ENCODE measurements at regions of chrX and their contacts with region 1.

Region 1: GRCh38 chrX:4547213-4547836 is 833.9 kb upstream of the PRKX start:
- DNase-seq: peak; percentile 77
- ATAC-seq: peak; percentile 52; the same call in 1 of the 2 replicates
- H3K4me3 ChIP-seq: no peak overlapping the region
- H3K27ac ChIP-seq: no peak overlapping the region
- H3K4me1 ChIP-seq: peaks cover 14% of the 10 kb centered on the region
- H3K27me3 ChIP-seq: no peaks in the 10 kb centered on the region
- CTCF ChIP-seq: peak; percentile 87

Region 2: DNA sequence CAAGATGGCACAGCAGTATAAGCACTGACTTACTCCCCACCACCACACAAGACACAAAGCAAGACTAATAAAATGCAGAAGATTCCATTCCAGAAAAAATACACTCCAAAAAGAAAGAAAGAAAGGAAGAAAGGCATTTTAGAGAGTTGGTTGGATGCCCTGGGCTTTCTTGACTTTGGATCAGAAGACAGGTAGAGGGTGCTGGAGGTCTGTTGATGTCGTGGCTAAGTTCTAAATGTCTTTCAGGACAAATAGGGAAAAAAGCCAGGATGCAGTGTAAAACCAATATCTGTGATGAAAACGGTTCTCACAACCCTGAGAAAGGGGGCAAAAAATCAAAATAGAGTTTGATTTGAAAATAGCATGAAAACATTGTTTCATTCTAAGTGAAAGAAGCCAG is 278.6 kb before region 1 on chrX:
- CTCF ChIA-PET with region 1: no interaction called
- POLR2A ChIA-PET with region 1: no interaction called
- intact Hi-C with region 1: loop called (anchors 2 kb)
- DNase-seq: peak; percentile 45
- ATAC-seq: peak; percentile 40; the same call in 1 of the 2 replicates
- H3K4me3 ChIP-seq: no peak overlapping the region
- H3K27ac ChIP-seq: no peak overlapping the region
- H3K4me1 ChIP-seq: peaks cover 9% of the 10 kb centered on the region
- H3K27me3 ChIP-seq: no peaks in the 10 kb centered on the region
- CTCF ChIP-seq: peak; percentile 55

Region 3: DNA sequence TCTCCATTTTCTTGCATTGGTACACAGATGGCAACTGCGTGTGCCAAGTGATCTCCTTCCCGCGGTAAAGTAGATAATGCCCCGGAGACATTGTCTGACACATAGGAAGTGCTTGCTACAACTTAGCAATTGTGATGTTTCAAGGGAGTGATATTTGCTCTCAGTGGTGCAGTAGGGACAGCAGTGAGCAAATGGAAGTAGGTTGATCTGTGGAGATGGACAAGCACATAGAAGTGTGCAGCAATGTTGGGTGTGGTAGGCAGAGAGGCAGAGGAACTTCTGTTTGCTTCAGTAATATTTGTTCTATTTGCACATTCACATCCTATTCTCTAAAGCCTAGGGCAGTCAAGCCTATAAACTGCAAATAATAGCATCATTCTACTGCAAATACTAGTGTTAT is 12.9 kb after region 1 on chrX:
- CTCF ChIA-PET with region 1: no interaction called
- POLR2A ChIA-PET with region 1: no interaction called
- intact Hi-C with region 1: no loop called
- DNase-seq: peak; percentile 65
- ATAC-seq: peak; percentile 97
- H3K4me3 ChIP-seq: no peak overlapping the region
- H3K27ac ChIP-seq: peak overlapping the region; percentile 9; the same call in 1 of the 2 replicates
- H3K4me1 ChIP-seq: peaks cover 9% of the 10 kb centered on the region
- H3K27me3 ChIP-seq: no peaks in the 10 kb centered on the region
- CTCF ChIP-seq: no peak

Region 4: DNA sequence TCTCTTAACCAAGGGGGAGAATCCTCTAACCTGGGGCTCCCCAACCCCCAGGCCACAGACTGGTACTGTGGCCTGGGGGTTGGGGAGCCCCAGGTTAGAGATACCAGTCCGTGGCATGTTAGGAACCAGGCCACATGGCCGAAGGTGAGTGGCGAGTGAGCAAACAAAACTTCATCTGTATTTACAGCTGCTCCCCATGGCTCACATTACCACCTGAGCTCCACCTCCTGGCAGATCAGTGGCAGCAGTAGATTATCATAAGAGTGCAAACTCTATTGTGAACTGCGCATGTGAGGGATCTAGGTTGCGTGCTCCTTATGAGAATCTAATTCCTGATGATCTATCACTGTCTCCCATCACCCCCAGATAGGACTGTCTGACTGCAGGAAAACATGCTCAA is 123.3 kb after region 1 on chrX:
- CTCF ChIA-PET with region 1: no interaction called
- POLR2A ChIA-PET with region 1: no interaction called
- intact Hi-C with region 1: loop called (anchors 1 kb)
- DNase-seq: peak; percentile 54
- ATAC-seq: peak; percentile 61
- H3K4me3 ChIP-seq: no peak overlapping the region
- H3K27ac ChIP-seq: no peak overlapping the region
- H3K4me1 ChIP-seq: peaks cover 51% of the 10 kb centered on the region
- H3K27me3 ChIP-seq: no peaks in the 10 kb centered on the region
- CTCF ChIP-seq: peak; percentile 40

Region 5: GRCh38 chrX:5718651-5719050 is 1171.3 kb after region 1 on chrX:
- CTCF ChIA-PET with region 1: no interaction called
- POLR2A ChIA-PET with region 1: no interaction called
- intact Hi-C with region 1: no loop called
- DNase-seq: no peak
- ATAC-seq: no peak
- H3K4me3 ChIP-seq: no peak overlapping the region
- H3K27ac ChIP-seq: no peak overlapping the region
- H3K4me1 ChIP-seq: no peaks in the 10 kb centered on the region
- H3K27me3 ChIP-seq: no peaks in the 10 kb centered on the region
- CTCF ChIP-seq: no peak

Measured in PC-3 (cell line).